PC-9 (cell line): ENCODE measurements at regions of chr17 and their contacts with region 1.

Region 1: DNA sequence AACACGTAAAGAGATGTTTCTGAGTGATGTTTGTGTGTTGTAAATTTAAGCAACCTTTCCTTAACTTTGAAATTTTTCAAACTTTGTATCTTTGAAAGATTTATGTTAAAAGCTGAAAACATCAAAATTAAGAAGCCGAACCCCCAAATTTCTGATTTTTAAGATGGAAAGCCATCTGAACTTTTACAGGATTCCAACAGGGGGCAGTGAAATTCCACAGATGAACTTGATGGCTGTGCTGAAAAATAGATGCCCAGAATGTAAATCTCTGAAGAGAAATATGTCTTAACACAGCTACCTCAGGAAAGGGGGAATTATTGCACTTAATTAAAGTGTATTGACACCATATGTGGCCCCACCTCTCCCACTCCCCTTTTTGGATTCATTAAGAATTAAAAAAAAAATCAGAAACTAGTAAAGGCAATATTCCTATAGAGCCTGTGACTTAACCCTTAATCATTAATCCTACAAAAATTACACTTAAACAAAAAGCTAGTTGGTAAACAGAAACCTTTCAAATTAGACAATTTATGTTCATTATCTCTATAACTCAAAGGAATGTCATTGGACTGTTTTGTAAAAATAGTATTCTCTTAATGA is 597.9 kb downstream of the KCNJ2 start:
- DNase-seq: peak in 1 of 2 experiments; percentile 8
- H3K4me3 ChIP-seq: no peak overlapping the region
- H3K27ac ChIP-seq: no peak overlapping the region
- H3K4me1 ChIP-seq: no peaks in the 10 kb centered on the region
- H3K27me3 ChIP-seq: no peaks in the 10 kb centered on the region
- CTCF ChIP-seq: peak; percentile 97

Region 2: GRCh38 chr17:70644096-70644495 is 123.1 kb before region 1 on chr17:
- CTCF ChIA-PET with region 1: no interaction called
- POLR2A ChIA-PET with region 1: no interaction called
- intact Hi-C with region 1: loop called (anchors 10 kb)
- DNase-seq: no peak
- H3K4me3 ChIP-seq: no peak overlapping the region
- H3K27ac ChIP-seq: no peak overlapping the region
- H3K4me1 ChIP-seq: no peaks in the 10 kb centered on the region
- H3K27me3 ChIP-seq: no peaks in the 10 kb centered on the region
- CTCF ChIP-seq: no peak

Region 3: DNA sequence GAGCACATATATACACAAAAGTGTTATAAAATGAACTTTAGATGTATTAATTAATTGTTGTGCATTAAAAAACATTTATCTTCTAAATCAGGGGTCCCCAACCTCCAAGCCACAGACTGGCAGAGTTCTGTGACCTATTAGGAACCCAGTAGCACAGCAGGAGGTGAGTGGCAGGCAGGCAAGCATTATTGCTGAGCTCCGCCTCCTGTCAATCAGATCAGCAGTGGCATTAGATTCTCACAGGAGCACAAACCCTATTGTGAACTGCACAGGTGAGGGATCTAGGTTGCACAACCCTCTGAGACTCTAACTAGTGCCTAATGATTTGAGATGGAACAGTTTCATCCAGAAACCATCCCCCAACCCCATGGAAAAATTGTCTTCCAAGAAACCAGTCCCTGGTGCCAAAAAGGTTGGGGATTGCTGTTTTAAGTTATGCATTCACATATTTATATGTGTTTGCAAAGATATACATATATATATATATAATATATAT is 14.2 kb before region 1 on chr17:
- CTCF ChIA-PET with region 1: no interaction called
- POLR2A ChIA-PET with region 1: no interaction called
- intact Hi-C with region 1: no loop called
- DNase-seq: no peak
- H3K4me3 ChIP-seq: no peak overlapping the region
- H3K27ac ChIP-seq: no peak overlapping the region
- H3K4me1 ChIP-seq: no peaks in the 10 kb centered on the region
- H3K27me3 ChIP-seq: no peaks in the 10 kb centered on the region
- CTCF ChIP-seq: no peak

Region 4: DNA sequence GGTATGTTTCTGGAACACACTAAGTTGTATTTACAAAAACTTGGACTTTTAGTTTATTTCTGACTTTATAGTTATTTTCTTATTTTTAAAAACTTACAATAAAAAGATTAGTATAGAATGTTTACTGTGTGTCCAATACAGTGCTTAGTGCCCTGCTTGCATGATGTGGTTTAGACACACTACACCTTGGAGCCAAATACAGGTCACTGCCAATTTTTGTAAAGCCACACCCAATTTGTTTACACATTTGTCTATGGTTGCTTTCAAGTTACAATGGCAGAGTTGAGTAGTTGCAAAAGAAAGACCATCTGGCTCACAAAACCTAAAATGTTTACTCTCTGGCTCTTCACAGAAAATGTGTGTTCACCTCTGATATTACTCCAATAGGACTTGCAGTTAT is 209.2 kb after region 1 on chr17:
- CTCF ChIA-PET with region 1: no interaction called
- POLR2A ChIA-PET with region 1: no interaction called
- intact Hi-C with region 1: no loop called
- DNase-seq: no peak
- H3K4me3 ChIP-seq: no peak overlapping the region
- H3K27ac ChIP-seq: no peak overlapping the region
- H3K4me1 ChIP-seq: no peaks in the 10 kb centered on the region
- H3K27me3 ChIP-seq: no peaks in the 10 kb centered on the region
- CTCF ChIP-seq: no peak

Region 5: DNA sequence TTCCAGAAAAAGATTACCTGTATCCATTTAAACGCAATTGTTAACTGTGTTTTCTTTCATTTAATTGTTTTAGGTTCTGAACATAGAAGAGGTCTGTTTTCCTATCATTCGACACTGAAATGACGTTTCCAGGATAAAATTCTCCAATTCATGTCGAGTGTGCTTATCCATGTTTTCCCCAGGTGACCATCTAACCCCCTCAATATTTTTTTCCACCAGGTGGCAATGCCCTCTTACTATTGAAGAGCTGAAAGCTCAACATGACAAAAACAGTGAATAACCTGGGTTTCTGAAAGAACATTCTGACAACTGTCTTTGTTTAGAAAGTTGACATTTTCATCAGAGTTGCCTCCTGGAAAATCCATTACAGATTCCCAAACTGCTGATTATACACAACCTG is 350.8 kb after region 1 on chr17:
- CTCF ChIA-PET with region 1: no interaction called
- POLR2A ChIA-PET with region 1: no interaction called
- intact Hi-C with region 1: loop called (anchors 10 kb)
- DNase-seq: peak in 1 of 2 experiments; percentile 27
- H3K4me3 ChIP-seq: no peak overlapping the region
- H3K27ac ChIP-seq: no peak overlapping the region
- H3K4me1 ChIP-seq: 0 out of 2 replicates have a peak, but pooled peaks cover 3% of the 10 kb centered on the region
- H3K27me3 ChIP-seq: no peaks in the 10 kb centered on the region
- CTCF ChIP-seq: peak; percentile 69